ENCODE measurements at regions of chr9 and their contacts with region 1.

Region 1: DNA sequence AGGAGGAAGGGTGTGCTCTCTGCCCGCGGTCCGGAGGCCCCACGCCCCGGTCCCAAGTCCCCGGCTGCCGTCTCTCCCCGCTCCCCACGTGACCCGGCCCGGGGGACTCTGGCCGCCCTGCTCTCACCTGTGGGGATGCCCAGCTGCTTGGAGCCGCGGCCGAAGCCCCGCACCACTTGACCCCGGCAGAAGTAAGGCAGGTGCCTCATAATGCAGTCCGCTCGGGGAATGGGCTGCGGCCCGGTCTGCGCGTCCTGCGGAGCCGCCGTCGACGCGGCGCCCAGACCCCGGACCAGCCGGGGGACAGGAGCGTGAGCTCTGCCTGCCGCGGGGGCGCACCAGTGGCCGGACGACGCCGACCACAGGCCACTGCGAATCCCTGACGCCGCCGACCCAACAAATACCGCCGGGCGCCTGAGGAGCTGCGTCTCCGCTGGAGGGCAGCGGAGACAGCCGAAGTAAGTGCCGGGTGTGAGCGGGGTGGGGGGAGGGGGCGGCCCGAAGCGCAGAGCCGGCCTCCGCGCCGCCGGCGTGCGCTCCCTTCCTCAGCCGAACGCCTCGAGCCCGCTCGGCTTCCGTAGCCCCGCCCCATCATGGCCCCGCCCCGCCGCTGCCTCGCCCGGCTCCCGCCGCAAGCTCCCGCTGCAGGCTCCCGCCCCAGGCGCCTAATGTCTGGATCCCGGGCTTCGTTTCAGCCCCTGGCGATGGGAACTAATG is at the start of gene RFK:
- DNase-seq: peak; percentile 94
- ATAC-seq: peak; percentile 88
- H3K4me3 Mint-ChIP-seq: peak within 1 kb of the TSS; percentile 90
- H3K27ac Mint-ChIP-seq: peak within 1 kb of the TSS; percentile 98
- H3K4me1 Mint-ChIP-seq: peaks cover 33% of the 10 kb centered on the region
- H3K27me3 Mint-ChIP-seq: no peaks in the 10 kb centered on the region
- total RNA-seq, gene RFK: 18.2 to 21.5 TPM

Region 2: GRCh38 chr9:76161541-76161940 is 232.6 kb before region 1 on chr9:
- CTCF ChIA-PET with region 1: no interaction called
- POLR2A ChIA-PET with region 1: no interaction called
- DNase-seq: no peak
- ATAC-seq: no peak
- H3K4me3 Mint-ChIP-seq: no peak overlapping the region
- H3K27ac Mint-ChIP-seq: no peak overlapping the region
- H3K4me1 Mint-ChIP-seq: peaks cover 4% of the 10 kb centered on the region
- H3K27me3 Mint-ChIP-seq: no peaks in the 10 kb centered on the region

Region 3: DNA sequence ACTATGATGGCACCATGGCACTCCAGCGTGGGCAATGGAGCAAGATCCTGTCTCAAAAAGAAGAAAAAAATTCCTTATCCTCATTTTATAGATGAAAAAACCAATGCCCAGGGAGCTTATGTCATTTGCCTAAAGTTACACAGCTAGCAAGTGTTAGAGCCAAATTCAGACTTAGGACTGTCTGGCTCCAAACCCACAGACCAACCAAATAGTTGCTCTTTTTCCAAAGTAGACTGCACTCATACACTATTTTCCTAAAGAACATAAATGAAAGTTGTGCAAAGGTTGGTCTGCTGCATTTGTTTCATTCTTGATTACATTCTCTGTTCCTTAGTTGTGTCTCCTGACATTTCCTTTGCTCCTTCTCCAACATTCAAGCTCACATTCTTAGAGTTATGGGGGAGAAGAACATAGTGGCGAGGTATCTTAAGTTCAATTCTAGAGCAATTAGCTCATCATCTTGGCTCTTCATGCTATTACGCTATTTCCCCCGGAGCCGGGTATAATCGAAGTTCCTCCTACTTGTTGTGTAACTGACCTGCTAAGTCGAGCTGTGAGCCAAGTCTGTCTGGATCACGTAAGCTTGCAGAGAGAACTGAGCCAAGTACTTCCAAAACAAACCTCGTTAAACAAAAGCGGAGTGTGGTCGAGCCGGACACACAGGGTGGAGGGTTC is 138.2 kb before region 1 on chr9:
- CTCF ChIA-PET with region 1: no interaction called
- POLR2A ChIA-PET with region 1: no interaction called
- DNase-seq: no peak
- ATAC-seq: no peak
- H3K4me3 Mint-ChIP-seq: no peak overlapping the region
- H3K27ac Mint-ChIP-seq: no peak overlapping the region
- H3K4me1 Mint-ChIP-seq: no peaks in the 10 kb centered on the region
- H3K27me3 Mint-ChIP-seq: peaks cover 3% of the 10 kb centered on the region

Region 4: GRCh38 chr9:76379512-76379911 is 14.6 kb before region 1 on chr9:
- CTCF ChIA-PET with region 1: interaction called, 6 read pairs
- POLR2A ChIA-PET with region 1: interaction called, 12 read pairs
- DNase-seq: no peak
- ATAC-seq: no peak
- H3K4me3 Mint-ChIP-seq: no peak overlapping the region
- H3K27ac Mint-ChIP-seq: no peak overlapping the region
- H3K4me1 Mint-ChIP-seq: no peaks in the 10 kb centered on the region
- H3K27me3 Mint-ChIP-seq: no peaks in the 10 kb centered on the region

Region 5: GRCh38 chr9:76419782-76420380 is 25.8 kb after region 1 on chr9:
- CTCF ChIA-PET with region 1: interaction called, 10 read pairs
- POLR2A ChIA-PET with region 1: interaction called, 5 read pairs
- DNase-seq: no peak
- ATAC-seq: no peak
- H3K4me3 Mint-ChIP-seq: no peak overlapping the region
- H3K27ac Mint-ChIP-seq: no peak overlapping the region
- H3K4me1 Mint-ChIP-seq: peaks cover 35% of the 10 kb centered on the region
- H3K27me3 Mint-ChIP-seq: no peaks in the 10 kb centered on the region

Region 6: GRCh38 chr9:76458903-76459690 is 65.0 kb after region 1 on chr9 and contains the start of gene GCNT1:
- CTCF ChIA-PET with region 1: interaction called, 5 read pairs
- POLR2A ChIA-PET with region 1: interaction called, 10 read pairs
- DNase-seq: peak; percentile 94
- ATAC-seq: peak; percentile 97
- H3K4me3 Mint-ChIP-seq: peak within 1 kb of the TSS; percentile 96
- H3K27ac Mint-ChIP-seq: peak within 1 kb of the TSS; percentile 88
- H3K4me1 Mint-ChIP-seq: peaks cover 30% of the 10 kb centered on the region
- H3K27me3 Mint-ChIP-seq: no peaks in the 10 kb centered on the region
- total RNA-seq, gene GCNT1: 7.7 to 8.0 TPM

Region 7: DNA sequence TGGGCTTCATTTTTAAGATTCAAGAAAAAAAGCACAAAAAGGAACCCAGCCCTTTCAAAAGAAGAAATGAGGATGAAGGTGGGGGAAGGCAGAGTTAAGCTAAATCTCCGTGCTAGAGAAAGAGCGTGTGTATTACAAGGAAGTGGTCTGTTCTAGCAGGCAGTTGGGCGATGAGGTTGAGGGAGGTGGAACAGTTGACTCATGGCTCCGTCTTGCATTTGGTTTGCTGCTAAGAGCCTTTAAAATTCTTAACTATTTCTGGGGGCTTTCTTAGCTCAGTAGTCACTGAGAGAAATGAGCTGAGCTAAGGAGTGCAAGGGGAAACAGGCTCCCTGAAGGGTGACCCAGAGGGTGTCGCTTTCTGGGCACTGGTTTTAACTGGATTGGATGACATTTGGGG is 182.2 kb after region 1 on chr9:
- CTCF ChIA-PET with region 1: no interaction called
- POLR2A ChIA-PET with region 1: interaction called, 11 read pairs
- DNase-seq: peak; percentile 92
- ATAC-seq: peak; percentile 92
- H3K4me3 Mint-ChIP-seq: peak overlapping the region; percentile 51
- H3K27ac Mint-ChIP-seq: peak overlapping the region; percentile 93
- H3K4me1 Mint-ChIP-seq: peaks cover 47% of the 10 kb centered on the region
- H3K27me3 Mint-ChIP-seq: peaks cover 2% of the 10 kb centered on the region

Region 8: GRCh38 chr9:76667521-76667957 is 273.4 kb after region 1 on chr9:
- CTCF ChIA-PET with region 1: interaction called, 11 read pairs
- POLR2A ChIA-PET with region 1: no interaction called
- DNase-seq: no peak
- ATAC-seq: no peak
- H3K4me3 Mint-ChIP-seq: no peak overlapping the region
- H3K27ac Mint-ChIP-seq: no peak overlapping the region
- H3K4me1 Mint-ChIP-seq: peaks cover 6% of the 10 kb centered on the region
- H3K27me3 Mint-ChIP-seq: peaks cover 8% of the 10 kb centered on the region

Region 9: DNA sequence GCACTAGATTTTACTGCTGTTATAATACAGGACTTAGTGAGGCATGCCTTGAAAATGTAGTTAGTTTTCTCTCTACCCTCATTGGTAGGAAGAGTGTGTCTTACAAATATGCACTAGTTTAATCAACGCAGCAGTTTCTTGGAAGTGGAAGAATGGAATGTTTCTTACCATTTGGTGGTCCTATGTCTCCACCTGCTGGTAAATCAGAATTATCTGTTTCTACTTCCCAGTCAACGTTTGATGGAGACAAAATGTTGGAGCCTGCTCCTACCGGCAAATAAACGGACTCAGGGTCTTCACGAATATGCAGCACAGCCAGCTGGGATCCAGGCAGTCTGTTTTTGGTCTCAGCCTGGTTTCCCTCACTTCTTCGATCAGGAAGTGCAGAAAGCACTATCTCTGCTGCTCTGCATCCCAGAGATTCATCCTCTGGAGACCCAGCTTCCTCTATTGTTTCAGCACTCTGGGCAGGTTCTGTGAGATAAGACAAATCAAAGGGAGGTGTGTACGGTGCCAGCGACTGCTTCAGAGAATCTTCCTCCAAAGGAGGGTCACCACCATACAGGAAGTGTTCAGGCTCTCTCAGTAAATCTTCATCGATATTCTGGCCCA is 310.6 kb after region 1 on chr9:
- CTCF ChIA-PET with region 1: interaction called, 13 read pairs
- POLR2A ChIA-PET with region 1: no interaction called
- DNase-seq: no peak
- ATAC-seq: peak; percentile 39
- H3K4me3 Mint-ChIP-seq: no peak overlapping the region
- H3K27ac Mint-ChIP-seq: no peak overlapping the region
- H3K4me1 Mint-ChIP-seq: peaks cover 7% of the 10 kb centered on the region
- H3K27me3 Mint-ChIP-seq: peaks cover 25% of the 10 kb centered on the region